Psoas muscle (tissue), 8 donors: ENCODE measurements at regions of chr16 and their contacts with region 1.

Region 1: GRCh38 chr16:73047518-73048291 is at the start of gene ZFHX3:
- DNase-seq: peak; percentile 81 to 92
- ATAC-seq: peak; percentile 66 to 75 (median 72)
- H3K4me3 ChIP-seq: peak within 1 kb of the TSS; percentile 84
- H3K27ac ChIP-seq: peak within 1 kb of the TSS; percentile 98
- H3K4me1 ChIP-seq: peaks cover 77% of the 10 kb centered on the region
- H3K27me3 ChIP-seq: no peaks in the 10 kb centered on the region
- CTCF ChIP-seq: no peak
- total RNA-seq, gene ZFHX3: 10.6 to 36.9 (median 26.2) TPM

Region 2: GRCh38 chr16:72832621-72833248 is 215.0 kb before region 1 on chr16:
- intact Hi-C with region 1: loop called in 1 of 2 experiments (anchors 5 kb)
- DNase-seq: peak; percentile 89 to 93
- ATAC-seq: peak; percentile 90 to 95 (median 93)
- H3K4me3 ChIP-seq: no peak overlapping the region
- H3K27ac ChIP-seq: peak overlapping the region; percentile 47
- H3K4me1 ChIP-seq: peaks cover 9% of the 10 kb centered on the region
- H3K27me3 ChIP-seq: no peaks in the 10 kb centered on the region
- CTCF ChIP-seq: peak; percentile 96

Region 3: GRCh38 chr16:72847187-72848027 is 200.3 kb before region 1 on chr16:
- intact Hi-C with region 1: loop called in 1 of 2 experiments (anchors 10 kb)
- DNase-seq: no peak
- ATAC-seq: peak in 2 of 4 donors; percentile 37 to 40
- H3K4me3 ChIP-seq: no peak overlapping the region
- H3K27ac ChIP-seq: peak overlapping the region; percentile 73
- H3K4me1 ChIP-seq: peaks cover 52% of the 10 kb centered on the region
- H3K27me3 ChIP-seq: no peaks in the 10 kb centered on the region
- CTCF ChIP-seq: peak; percentile 40

Region 4: DNA sequence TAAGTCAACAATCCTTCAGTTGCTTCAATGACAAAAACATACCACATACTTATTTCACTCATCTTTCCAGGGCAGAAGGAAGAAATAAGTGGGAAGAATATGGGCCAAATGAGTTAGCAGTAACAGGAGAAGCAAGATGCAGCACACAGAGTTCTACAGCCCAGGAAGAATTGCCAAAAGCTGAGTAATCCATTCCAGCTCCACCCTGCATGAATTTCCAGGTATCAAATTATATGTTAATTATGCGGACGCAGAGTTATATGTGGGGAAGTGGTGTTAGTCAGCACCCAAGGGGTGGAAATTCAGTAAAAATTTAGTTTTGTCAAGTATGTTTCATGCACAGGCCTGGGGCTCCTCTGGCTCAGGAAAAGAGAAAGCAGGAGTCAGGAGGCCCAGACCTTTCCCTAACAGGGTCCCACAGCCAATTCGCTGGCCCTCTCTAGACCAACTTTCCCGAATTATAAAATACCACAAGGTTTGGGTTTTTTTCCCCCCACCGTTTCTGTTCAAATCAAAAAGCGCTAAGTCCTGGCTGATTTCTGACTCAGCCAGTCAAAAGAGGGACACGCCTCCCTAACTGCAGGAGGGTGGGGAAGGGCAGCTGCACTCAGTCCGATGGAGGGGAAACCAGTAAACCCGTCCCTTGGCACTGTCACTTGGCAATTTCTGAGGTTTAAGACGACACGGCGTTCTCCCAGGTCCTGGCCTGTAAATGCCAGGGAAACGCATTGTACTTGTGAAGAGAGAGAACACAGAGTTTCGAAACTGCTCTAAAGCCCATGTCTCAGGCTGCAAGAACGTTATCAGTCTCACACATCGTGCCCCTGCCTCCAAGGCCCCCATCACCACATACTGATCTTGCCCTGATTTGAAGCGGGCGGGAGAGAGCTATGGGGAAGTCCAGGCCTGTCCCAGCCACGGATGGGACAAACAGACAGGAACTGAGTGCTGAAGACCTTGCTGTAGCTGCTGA is 57.8 kb before region 1 on chr16:
- intact Hi-C with region 1: loop called (anchors 1 to 5 kb)
- DNase-seq: peak; percentile 86 to 95
- ATAC-seq: peak; percentile 75 to 82 (median 78)
- H3K4me3 ChIP-seq: peak overlapping the region; percentile 61
- H3K27ac ChIP-seq: peak overlapping the region; percentile 97
- H3K4me1 ChIP-seq: peaks cover 78% of the 10 kb centered on the region
- H3K27me3 ChIP-seq: no peaks in the 10 kb centered on the region
- CTCF ChIP-seq: no peak

Region 5: GRCh38 chr16:73020362-73020884 is 27.3 kb before region 1 on chr16:
- intact Hi-C with region 1: no loop called
- DNase-seq: peak; percentile 85
- ATAC-seq: peak; percentile 44 to 62 (median 55)
- H3K4me3 ChIP-seq: peak overlapping the region; percentile 20
- H3K27ac ChIP-seq: peak overlapping the region; percentile 78
- H3K4me1 ChIP-seq: peaks cover 85% of the 10 kb centered on the region
- H3K27me3 ChIP-seq: no peaks in the 10 kb centered on the region
- CTCF ChIP-seq: no peak